ENCODE measurements at regions of chr2 and their contacts with region 1.

Region 1: GRCh38 chr2:44087036-44087713 is 81.5 kb upstream of the PPM1B start:
- DNase-seq: peak; percentile 85 to 90
- ATAC-seq: peak; percentile 95 to 98 (median 95)
- H3K4me3 ChIP-seq: peak overlapping the region; percentile 21
- H3K4me3 Mint-ChIP-seq: peak overlapping the region; percentile 88
- H3K27ac ChIP-seq: peak overlapping the region; percentile 12
- H3K27ac Mint-ChIP-seq: peak overlapping the region; percentile 91
- H3K4me1 ChIP-seq: peaks cover 29% of the 10 kb centered on the region
- H3K4me1 Mint-ChIP-seq: peaks cover 20 to 25% of the 10 kb centered on the region in 2 donors
- H3K27me3 ChIP-seq: no peaks in the 10 kb centered on the region
- H3K27me3 Mint-ChIP-seq: no peaks in the 10 kb centered on the region
- CTCF ChIP-seq: peak; percentile 93

Region 2: DNA sequence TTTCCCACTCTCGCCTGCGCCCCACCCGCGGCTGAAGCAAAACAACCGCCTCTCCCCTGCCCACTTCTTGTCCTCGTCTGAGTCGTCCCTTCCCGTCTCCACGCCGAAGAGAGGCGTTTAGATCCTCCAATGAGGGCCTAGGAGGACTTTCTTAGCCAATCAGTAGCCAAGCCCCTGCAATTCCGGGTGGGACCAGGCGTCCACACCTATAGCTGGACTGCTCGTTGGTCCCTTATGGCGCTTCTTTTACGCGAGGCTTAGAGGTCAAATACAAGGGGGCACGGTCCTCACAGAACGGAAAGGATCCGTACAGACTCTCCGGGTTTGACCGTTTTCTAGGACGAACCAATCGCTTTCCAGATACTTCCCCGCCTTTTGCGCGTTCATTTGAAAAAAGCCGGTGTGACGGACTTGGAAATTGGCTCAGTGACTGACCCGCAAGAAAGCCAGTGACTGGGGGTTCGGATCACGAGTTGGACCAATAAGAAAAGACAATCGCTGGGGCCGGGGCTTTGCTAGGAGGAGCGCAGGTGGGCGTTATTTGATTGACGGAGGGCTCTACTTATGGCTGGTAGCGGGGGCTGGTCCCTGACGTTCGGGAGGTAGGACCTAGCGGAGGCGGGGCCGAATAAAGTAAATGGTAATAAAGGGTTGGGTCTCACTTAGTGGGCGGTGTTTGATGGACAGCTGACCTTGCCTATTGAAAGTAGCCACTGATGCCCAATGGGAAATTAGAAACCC is 80.9 kb after region 1 on chr2:
- intact Hi-C with region 1: loop called (anchors 5 kb)
- DNase-seq: peak; percentile 90 to 99
- ATAC-seq: peak; percentile 76 to 92 (median 79)
- H3K4me3 ChIP-seq: peak overlapping the region; percentile 68
- H3K4me3 Mint-ChIP-seq: peak overlapping the region; percentile 97
- H3K27ac ChIP-seq: peak overlapping the region; percentile 93
- H3K27ac Mint-ChIP-seq: peak overlapping the region; percentile 90 to 96
- H3K4me1 ChIP-seq: peaks cover 12% of the 10 kb centered on the region
- H3K4me1 Mint-ChIP-seq: peaks cover 34 to 42% of the 10 kb centered on the region in 2 donors
- H3K27me3 ChIP-seq: no peaks in the 10 kb centered on the region
- H3K27me3 Mint-ChIP-seq: no peaks in the 10 kb centered on the region
- CTCF ChIP-seq: no peak

Region 3: GRCh38 chr2:44295607-44296359 is 208.6 kb after region 1 on chr2:
- intact Hi-C with region 1: loop called (anchors 2 kb)
- DNase-seq: peak in 1 of 2 donors; percentile 42
- ATAC-seq: no peak
- H3K4me3 ChIP-seq: no peak overlapping the region
- H3K4me3 Mint-ChIP-seq: no peak overlapping the region
- H3K27ac ChIP-seq: no peak overlapping the region
- H3K27ac Mint-ChIP-seq: peak overlapping the region in 1 of 2 donors; percentile 64
- H3K4me1 ChIP-seq: no peaks in the 10 kb centered on the region
- H3K4me1 Mint-ChIP-seq: peaks cover 9 to 21% of the 10 kb centered on the region in 2 donors
- H3K27me3 ChIP-seq: no peaks in the 10 kb centered on the region
- H3K27me3 Mint-ChIP-seq: peaks cover 3 to 4% of the 10 kb centered on the region in 2 donors
- CTCF ChIP-seq: no peak

Region 4: DNA sequence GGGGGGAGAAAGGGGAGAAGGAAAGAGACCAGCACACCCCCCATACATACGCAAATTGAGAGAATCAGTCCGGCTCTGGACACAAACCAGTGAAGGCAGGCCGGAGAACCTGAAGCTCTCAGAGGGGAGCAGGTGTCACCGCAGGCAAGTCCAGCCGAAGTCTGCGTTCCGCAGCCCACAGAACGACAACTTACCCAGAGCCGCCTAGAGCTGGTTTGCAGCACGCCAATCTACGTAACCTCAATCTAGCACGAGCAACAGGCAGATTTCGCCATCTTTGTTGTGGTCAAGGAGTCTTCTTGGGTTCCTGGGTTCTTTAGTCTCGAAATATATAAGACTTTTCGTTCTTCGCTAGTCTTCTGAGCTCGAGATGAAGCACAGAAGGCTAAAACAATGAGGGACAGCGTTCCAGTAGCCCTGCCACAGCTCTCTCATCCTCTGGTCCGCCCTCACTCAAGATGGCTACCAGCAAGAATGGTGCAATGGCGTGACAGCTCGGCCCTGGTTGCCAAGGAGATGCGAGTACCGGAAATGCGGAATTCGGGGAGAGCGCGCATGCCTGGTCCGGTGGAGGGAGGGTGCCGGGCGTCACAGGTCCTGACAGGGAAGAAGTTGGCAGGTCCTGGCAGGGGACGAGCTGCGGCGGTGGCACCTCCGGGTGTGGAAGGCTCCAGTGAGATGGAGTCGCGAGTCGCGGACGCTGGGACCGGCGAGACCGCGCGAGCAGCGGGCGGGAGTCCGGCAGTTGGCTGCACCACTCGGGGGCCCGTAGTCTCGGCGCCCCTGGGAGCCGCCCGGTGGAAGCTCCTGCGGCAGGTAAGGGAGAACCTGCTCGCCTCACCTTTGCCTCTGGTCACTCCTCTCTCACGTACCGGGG is 274.4 kb after region 1 on chr2 and contains the starts of genes CAMKMT and PREPL:
- intact Hi-C with region 1: loop called (anchors 5 kb)
- DNase-seq: peak; percentile 96 to 99
- ATAC-seq: peak; percentile 88 to 95 (median 90)
- H3K4me3 ChIP-seq: peak within 1 kb of the TSS; percentile 75
- H3K4me3 Mint-ChIP-seq: peak within 1 kb of the TSS; percentile 99
- H3K27ac ChIP-seq: peak within 1 kb of the TSS; percentile 91
- H3K27ac Mint-ChIP-seq: peak within 1 kb of the TSS; percentile 95 to 99
- H3K4me1 ChIP-seq: peaks cover 7% of the 10 kb centered on the region
- H3K4me1 Mint-ChIP-seq: peaks cover 32 to 47% of the 10 kb centered on the region in 2 donors
- H3K27me3 ChIP-seq: no peaks in the 10 kb centered on the region
- H3K27me3 Mint-ChIP-seq: no peaks in the 10 kb centered on the region
- CTCF ChIP-seq: no peak
- total RNA-seq, gene CAMKMT: 18.1 to 25.0 (median 20.6) TPM
- total RNA-seq, gene PREPL: 17.2 to 23.2 (median 18.4) TPM

Region 5: DNA sequence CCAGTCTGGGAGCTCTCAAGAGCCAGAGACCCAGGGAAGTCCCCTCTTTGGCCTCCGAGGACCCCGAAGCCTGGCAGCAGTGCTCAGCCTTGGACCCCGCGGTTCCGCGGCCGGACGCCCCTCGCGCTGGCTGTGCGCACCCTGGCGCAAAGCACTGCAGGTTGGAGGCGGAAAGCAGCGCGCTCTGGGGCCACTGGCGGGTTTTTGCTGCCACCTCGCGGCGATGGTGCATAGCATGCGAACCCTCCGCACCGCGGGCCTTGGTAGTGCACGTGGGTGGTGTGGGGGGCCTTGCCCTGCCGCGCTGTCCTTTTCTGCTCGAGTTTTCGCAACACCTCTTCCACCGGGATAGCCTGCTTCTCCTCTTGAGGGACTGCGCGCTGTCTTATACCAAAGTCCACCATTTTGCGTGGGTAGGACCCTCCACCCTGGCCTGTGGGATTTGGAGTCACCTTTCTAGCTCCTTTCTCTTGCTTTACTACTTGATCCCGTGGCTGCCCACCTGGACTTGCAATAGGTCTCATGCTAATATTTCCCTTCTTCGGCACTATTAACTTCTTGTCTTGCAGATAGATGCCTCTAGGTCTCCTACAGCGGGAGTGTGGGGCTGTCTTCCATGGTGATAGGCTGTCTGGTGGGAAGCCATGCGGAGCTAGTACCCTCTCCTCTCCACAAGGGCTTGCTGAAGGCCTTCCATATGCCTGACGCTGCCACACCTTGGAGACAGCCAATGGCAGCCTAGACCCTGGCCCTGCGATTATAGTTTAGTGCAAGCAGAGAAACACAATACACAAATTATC is 868.6 kb after region 1 on chr2:
- intact Hi-C with region 1: loop called (anchors 5 kb)
- DNase-seq: peak; percentile 56 to 78
- ATAC-seq: peak; percentile 64 to 91 (median 74)
- H3K4me3 ChIP-seq: no peak overlapping the region
- H3K4me3 Mint-ChIP-seq: no peak overlapping the region
- H3K27ac ChIP-seq: no peak overlapping the region
- H3K27ac Mint-ChIP-seq: no peak overlapping the region
- H3K4me1 ChIP-seq: peaks cover 11% of the 10 kb centered on the region
- H3K4me1 Mint-ChIP-seq: peaks cover 5 to 10% of the 10 kb centered on the region in 2 donors
- H3K27me3 ChIP-seq: peaks cover 21% of the 10 kb centered on the region
- H3K27me3 Mint-ChIP-seq: peaks cover 57 to 66% of the 10 kb centered on the region in 2 donors
- CTCF ChIP-seq: peak; percentile 61

Measured in natural killer cell (primary cell).